Activated T-helper 1 cell treated with anti-CD3 and anti-CD28 coated beads, Interleukin-12 subunit alpha, Interleukin-12 subunit beta, Interleukin-2, Interleukin-4 antibody, amounts not matched to agents 30 ng/mL and 10 ng/mL and 1 ng/mL, durations not matched to agents 14 hours and 24 hours and 36 hours (primary cell): ENCODE measurements at regions of chr18 and their contacts with region 1.

Region 1: DNA sequence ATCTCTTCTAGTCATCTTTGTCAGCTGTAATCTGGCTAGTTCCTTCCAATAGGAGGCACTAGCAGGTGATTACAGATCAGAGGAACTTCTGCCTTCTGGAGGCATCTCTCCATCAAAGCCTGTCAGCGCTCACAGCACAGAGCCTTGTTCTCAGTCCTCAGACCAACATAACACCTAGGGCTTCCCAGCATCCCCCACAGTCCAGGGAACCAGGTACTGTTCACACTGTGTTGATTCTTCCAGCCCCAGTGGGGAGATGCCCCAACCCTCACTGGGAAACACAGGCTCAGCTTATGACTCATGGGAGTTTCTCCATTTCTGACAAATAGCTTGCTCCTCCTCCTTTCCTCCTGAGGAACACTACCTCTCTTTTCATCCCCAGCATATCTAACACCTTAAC is 601.7 kb downstream of the CBLN2 start:
- DNase-seq: no peak
- H3K4me3 Mint-ChIP-seq: no peak overlapping the region
- H3K27ac Mint-ChIP-seq: no peak overlapping the region
- H3K4me1 Mint-ChIP-seq: no peaks in the 10 kb centered on the region
- H3K27me3 Mint-ChIP-seq: no peaks in the 10 kb centered on the region

Region 2: DNA sequence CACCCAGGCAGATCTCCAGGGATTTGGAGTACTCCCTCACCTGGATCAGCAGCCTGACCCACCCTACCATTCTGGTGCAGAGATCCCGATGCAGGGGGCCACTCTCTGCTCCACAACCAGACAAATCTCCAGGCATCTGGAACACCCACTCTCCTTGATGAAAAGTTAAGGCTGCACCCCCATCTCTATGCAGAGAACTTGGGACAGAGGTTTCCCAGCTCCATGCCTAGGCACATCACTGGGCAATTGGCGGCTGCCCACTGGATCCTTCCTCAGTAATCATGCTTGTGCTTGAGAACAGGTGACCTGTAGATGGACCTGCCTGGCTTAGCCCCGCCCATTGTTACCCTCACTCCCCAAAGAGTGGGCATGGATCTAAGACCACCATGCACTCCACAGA is 23.2 kb before region 1 on chr18:
- intact Hi-C with region 1: loop called (anchors 1 kb)
- DNase-seq: no peak
- H3K4me3 Mint-ChIP-seq: no peak overlapping the region
- H3K27ac Mint-ChIP-seq: no peak overlapping the region
- H3K4me1 Mint-ChIP-seq: no peaks in the 10 kb centered on the region
- H3K27me3 Mint-ChIP-seq: no peaks in the 10 kb centered on the region

Region 3: DNA sequence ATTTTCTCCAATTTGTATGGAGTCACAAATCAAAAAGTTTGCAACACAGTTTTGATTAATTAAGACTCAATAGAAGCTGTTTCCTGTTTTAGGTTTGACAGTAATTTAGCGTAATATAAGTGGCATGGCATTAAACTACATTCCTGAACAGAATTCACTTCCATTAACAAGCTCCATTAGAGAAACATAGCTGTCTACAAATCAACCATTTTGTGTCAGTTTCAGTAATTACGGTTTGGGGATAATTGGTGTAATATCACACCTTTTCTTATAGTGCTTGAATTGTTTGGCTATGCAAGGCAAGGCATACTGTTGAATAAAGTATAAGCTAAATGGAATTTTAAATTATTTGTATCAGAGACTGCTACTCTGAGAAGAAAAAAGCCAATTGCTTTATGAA is 16.2 kb after region 1 on chr18:
- intact Hi-C with region 1: no loop called
- DNase-seq: no peak
- H3K4me3 Mint-ChIP-seq: no peak overlapping the region
- H3K27ac Mint-ChIP-seq: no peak overlapping the region
- H3K4me1 Mint-ChIP-seq: no peaks in the 10 kb centered on the region
- H3K27me3 Mint-ChIP-seq: no peaks in the 10 kb centered on the region